GM12878 (cell line): ENCODE measurements at regions of chr2 and their contacts with region 1.

Region 1: DNA sequence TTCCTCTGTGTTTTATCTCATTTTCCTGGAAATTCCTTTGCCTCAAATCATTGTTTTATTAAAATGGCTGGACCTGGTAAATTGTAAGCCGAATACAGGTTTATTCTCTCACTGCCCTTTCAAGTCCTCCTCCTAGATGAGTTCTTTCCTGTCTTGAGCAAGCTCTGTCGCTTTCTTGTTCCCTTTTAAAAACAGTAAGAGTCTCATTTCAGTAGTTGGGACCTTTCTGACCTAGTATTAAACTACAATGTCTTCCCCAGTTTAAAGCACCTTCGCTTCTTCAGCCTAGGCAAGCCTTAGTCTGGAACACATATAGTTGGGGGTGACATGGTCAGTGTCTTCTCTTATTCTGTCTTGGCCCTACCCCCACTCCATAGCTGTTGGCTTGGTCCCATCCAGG is 40.9 kb upstream of the SP140L start:
- DNase-seq: no peak
- ATAC-seq: no peak
- H3K4me3 ChIP-seq: no peak overlapping the region
- H3K27ac ChIP-seq: no peak overlapping the region
- H3K4me1 ChIP-seq: peaks cover 9% of the 10 kb centered on the region
- H3K27me3 ChIP-seq: no peaks in the 10 kb centered on the region
- CTCF ChIP-seq: no peak
- EP300 ChIP-seq: no peak
- POLR2A ChIP-seq: no peak
- RAD21 ChIP-seq: no peak

Region 2: DNA sequence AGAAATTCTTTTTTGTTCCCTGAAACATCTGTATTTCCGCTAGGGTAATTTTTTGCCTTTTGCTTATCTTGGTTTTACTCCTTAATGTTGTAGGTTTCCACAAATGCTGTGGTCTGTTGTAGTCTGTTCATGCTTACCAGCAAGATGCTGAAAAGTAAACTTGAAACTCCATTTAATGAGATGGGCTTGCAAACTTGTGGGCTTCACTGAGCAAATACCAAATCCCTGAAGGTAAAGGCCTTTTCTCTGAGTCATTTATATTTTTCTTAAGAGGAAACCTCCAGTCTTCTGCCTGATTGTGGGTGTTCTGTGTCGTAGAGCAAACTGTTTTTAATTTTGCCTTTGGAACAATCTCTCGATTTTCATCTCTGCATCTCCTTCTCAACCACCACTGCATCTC is 51.2 kb before region 1 on chr2:
- CTCF ChIA-PET with region 1: no interaction called
- POLR2A ChIA-PET with region 1: no interaction called
- RAD21 ChIA-PET with region 1: no interaction called
- SMC1A ChIA-PET with region 1: no interaction called
- in situ Hi-C with region 1: no loop called
- intact Hi-C with region 1: loop called (anchors 2 kb)
- DNase-seq: peak; percentile 58
- ATAC-seq: peak; percentile 77
- H3K4me3 ChIP-seq: no peak overlapping the region
- H3K27ac ChIP-seq: no peak overlapping the region
- H3K4me1 ChIP-seq: peaks cover 28% of the 10 kb centered on the region
- H3K27me3 ChIP-seq: no peaks in the 10 kb centered on the region
- CTCF ChIP-seq: no peak
- EP300 ChIP-seq: peak in 1 of 2 experiments; percentile 69; a peak in 1 of 4 replicates
- POLR2A ChIP-seq: no peak
- RAD21 ChIP-seq: no peak

Region 3: DNA sequence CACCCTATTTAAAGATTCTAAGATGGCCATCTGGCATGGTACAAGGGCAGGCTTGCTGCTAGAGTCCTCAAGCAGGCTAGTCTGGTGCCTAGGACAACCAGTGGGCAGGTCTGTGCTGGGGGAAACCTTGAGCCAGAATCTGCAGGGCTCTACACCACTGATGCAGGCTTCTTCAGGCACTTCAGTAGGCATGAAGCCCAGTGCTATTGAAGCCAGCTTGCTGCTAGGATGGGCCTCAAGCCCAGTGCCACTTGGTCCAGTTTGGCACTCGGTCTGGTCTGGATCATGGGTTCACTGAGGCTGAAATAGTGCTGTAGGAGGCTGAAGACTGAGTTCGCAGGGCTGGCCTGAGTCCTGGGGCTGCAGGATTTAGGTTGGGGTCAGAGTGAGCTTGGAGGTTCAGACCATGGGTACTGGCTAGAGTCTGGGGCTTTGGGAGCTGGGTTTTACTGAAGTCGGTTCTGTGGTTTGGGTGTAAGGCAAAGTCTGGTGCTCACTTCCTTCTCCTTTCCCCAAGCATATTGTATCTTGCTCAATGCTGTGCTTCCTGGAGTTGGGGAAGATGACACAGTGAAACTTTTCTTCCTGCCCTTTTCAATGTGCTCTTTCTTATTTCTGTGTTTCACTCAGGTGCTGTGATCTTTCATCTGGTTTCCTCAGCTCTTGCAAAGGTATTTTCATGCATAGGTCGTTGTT is 171.2 kb after region 1 on chr2:
- CTCF ChIA-PET with region 1: no interaction called
- POLR2A ChIA-PET with region 1: no interaction called
- RAD21 ChIA-PET with region 1: no interaction called
- SMC1A ChIA-PET with region 1: no interaction called
- in situ Hi-C with region 1: no loop called
- intact Hi-C with region 1: no loop called
- DNase-seq: no peak
- ATAC-seq: peak; percentile 37
- H3K4me3 ChIP-seq: no peak overlapping the region
- H3K27ac ChIP-seq: peak overlapping the region; percentile 49
- H3K4me1 ChIP-seq: peaks cover 18% of the 10 kb centered on the region
- H3K27me3 ChIP-seq: no peaks in the 10 kb centered on the region
- CTCF ChIP-seq: no peak
- EP300 ChIP-seq: no peak
- POLR2A ChIP-seq: peak; percentile 44
- RAD21 ChIP-seq: no peak